Activated CD4-positive, alpha-beta memory T cell treated with anti-CD3 and anti-CD28 coated beads, Interleukin-2, amount 10 ng/mL, durations not matched to agents 7 days and 5 days (primary cell): ENCODE measurements at regions of chr5 and their contacts with region 1.

Region 1: GRCh38 chr5:96963267-96963666 is 27.4 kb downstream of the LNPEP start:
- DNase-seq: peak; percentile 36
- H3K4me3 Mint-ChIP-seq: no peak overlapping the region
- H3K27ac Mint-ChIP-seq: peak overlapping the region; percentile 74
- H3K4me1 Mint-ChIP-seq: peaks cover 56% of the 10 kb centered on the region
- H3K27me3 Mint-ChIP-seq: no peaks in the 10 kb centered on the region

Region 2: DNA sequence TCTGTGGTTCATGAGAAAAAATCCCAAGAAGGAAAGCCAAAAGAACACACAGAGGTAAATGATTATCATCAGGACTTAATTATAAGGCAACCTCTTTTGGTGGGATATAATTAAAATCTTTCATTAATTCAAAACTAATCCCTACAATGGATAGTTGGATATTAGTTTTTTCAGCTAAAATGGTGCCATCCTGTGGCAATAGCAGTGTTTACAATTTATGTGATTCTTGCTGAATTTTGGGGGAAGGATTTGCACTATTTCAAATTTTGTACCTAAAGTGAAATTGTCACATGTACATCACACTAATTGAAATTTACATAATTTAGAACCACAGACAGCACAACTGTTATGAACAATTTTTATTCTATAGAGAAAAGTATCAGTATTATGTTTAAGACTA is 234.1 kb before region 1 on chr5:
- CTCF ChIA-PET with region 1: no interaction called
- POLR2A ChIA-PET with region 1: no interaction called
- DNase-seq: no peak
- H3K4me3 Mint-ChIP-seq: no peak overlapping the region
- H3K27ac Mint-ChIP-seq: no peak overlapping the region
- H3K4me1 Mint-ChIP-seq: peaks cover 3% of the 10 kb centered on the region
- H3K27me3 Mint-ChIP-seq: no peaks in the 10 kb centered on the region

Region 3: DNA sequence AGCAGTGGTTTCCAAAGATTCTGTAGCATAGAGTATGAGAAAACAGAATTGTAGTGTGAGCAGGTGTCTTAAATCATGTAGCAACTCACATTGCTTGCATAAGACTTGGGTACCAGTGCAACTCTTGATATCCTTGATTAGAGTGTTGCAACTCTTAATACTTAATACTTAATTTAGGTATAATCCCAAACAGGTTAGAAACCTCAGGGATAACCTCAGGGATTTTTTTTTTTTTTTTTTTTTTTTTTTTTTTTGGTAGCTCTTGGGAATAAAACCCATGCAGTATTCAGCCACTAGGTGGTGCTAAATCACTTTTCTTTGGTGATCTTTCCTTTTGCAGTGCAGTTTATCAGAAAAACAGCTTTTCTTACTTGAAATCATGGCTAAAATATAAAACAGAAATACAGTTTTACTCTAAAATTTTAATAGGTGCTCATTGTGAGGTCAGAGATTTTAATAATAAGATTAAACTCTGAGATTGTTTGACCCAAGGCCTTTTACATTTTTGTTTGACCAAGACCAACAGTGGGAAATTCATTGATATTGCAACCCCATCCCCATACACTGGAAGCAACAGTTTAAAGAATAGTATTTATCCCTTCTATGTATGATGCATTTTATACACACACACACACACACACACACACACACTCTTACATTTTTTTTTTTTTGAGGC is 210.8 kb before region 1 on chr5:
- CTCF ChIA-PET with region 1: no interaction called
- POLR2A ChIA-PET with region 1: no interaction called
- DNase-seq: no peak
- H3K4me3 Mint-ChIP-seq: no peak overlapping the region
- H3K27ac Mint-ChIP-seq: no peak overlapping the region
- H3K4me1 Mint-ChIP-seq: no peaks in the 10 kb centered on the region
- H3K27me3 Mint-ChIP-seq: no peaks in the 10 kb centered on the region

Region 4: GRCh38 chr5:96844476-96844990 is 118.7 kb before region 1 on chr5:
- CTCF ChIA-PET with region 1: no interaction called
- POLR2A ChIA-PET with region 1: no interaction called
- DNase-seq: no peak
- H3K4me3 Mint-ChIP-seq: no peak overlapping the region
- H3K27ac Mint-ChIP-seq: no peak overlapping the region
- H3K4me1 Mint-ChIP-seq: peaks cover 12% of the 10 kb centered on the region
- H3K27me3 Mint-ChIP-seq: peaks cover 17% of the 10 kb centered on the region

Region 5: GRCh38 chr5:96952118-96952750 is 11.0 kb before region 1 on chr5:
- CTCF ChIA-PET with region 1: no interaction called
- POLR2A ChIA-PET with region 1: no interaction called
- DNase-seq: no peak
- H3K4me3 Mint-ChIP-seq: no peak overlapping the region
- H3K27ac Mint-ChIP-seq: no peak overlapping the region
- H3K4me1 Mint-ChIP-seq: peaks cover 41% of the 10 kb centered on the region
- H3K27me3 Mint-ChIP-seq: no peaks in the 10 kb centered on the region

Region 6: DNA sequence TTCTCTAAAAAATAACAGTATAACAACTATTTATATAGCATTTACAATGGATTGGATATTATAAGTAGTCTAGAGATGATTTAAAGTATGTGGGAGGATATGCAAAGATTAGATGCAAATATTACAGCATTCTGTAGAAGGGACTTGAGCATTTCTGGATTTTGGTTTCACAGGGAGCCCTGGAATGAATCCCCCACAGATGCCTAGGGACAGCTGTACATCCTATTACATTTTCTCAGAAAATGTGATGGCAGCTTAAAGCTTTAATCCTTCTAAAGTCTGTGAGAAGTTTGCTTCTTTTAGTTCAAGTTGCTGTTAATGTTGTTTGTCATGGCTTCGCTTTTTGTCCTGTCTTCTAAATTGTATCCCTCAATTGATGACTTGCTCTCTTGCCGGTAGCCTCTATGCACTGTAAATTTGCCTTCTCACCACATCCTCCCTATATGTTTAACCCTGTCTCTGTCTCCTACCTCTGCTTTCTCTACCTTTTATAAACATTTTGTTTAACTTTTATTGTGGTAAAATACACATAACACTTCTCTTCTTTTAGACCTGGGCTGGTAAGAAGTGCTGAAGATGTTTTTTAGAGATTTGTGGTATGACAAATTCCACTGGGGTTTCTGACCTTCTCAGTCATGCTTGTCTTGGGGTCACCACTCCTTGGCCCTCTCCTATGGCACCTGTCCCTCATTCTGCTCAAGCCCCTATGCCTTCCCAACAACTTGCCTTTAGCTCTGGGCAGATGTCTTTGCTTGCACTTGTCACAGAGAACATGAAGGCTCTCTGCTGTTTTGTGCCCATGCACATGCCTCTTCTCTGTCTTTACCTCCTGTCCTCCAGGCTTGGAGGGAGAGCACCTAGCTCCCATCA is 10.5 kb after region 1 on chr5:
- CTCF ChIA-PET with region 1: interaction called, 3 read pairs
- POLR2A ChIA-PET with region 1: interaction called, 23 read pairs
- DNase-seq: no peak
- H3K4me3 Mint-ChIP-seq: no peak overlapping the region
- H3K27ac Mint-ChIP-seq: peak overlapping the region; percentile 8
- H3K4me1 Mint-ChIP-seq: peaks cover 44% of the 10 kb centered on the region
- H3K27me3 Mint-ChIP-seq: no peaks in the 10 kb centered on the region